GM13976 (cell line): ENCODE measurements at regions of chr16 and their contacts with region 1.

Region 1: GRCh38 chr16:35598696-35599332 is 2139.4 kb downstream of the TP53TG3F start:
- DNase-seq: no peak
- CTCF ChIP-seq: no peak

Region 2: GRCh38 chr16:35492225-35492624 is 106.6 kb before region 1 on chr16:
- in situ Hi-C with region 1: loop called (anchors 25 kb)
- DNase-seq: no peak
- CTCF ChIP-seq: no peak

Region 3: GRCh38 chr16:35713762-35714650 is 115.2 kb after region 1 on chr16:
- in situ Hi-C with region 1: loop called (anchors 25 kb)
- DNase-seq: no peak
- CTCF ChIP-seq: no peak